ENCODE measurements at regions of chr11 and their contacts with region 1.

Region 1: GRCh38 chr11:65251476-65251875 is 10.3 kb upstream of the POLA2 start:
- DNase-seq: no peak
- H3K4me3 ChIP-seq: no peak overlapping the region
- H3K27ac ChIP-seq: no peak overlapping the region
- H3K4me1 ChIP-seq: no peaks in the 10 kb centered on the region
- H3K27me3 ChIP-seq: no peaks in the 10 kb centered on the region
- CTCF ChIP-seq: no peak
- EP300 ChIP-seq: no peak
- POLR2A ChIP-seq: no peak

Region 2: DNA sequence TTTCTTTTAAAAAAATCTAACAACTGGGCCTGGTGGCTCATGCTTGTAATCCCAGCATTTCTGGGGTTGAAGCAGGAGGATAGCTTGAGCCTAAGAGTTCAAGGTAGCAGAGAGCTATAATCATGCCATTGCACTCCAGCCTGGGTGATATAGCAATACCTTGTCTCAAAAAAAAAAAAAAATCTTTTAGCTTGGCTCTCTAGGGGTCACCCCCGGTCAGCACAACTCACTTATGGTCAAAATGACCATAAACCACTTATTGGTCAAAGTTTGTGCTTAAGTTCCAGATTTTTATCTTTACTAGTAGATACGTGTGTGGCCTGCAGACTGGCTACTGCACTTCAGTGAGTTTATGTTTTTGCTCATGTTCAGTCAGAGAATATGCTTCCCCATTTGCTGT is 87.8 kb before region 1 on chr11:
- in situ Hi-C with region 1: loop called in 1 of 4 experiments (anchors 5 kb)
- intact Hi-C with region 1: no loop called
- DNase-seq: no peak
- H3K4me3 ChIP-seq: no peak overlapping the region
- H3K27ac ChIP-seq: no peak overlapping the region
- H3K4me1 ChIP-seq: peaks cover 0 to 9% (median 0%) of the 10 kb centered on the region in 4 donors
- H3K27me3 ChIP-seq: no peaks in the 10 kb centered on the region
- CTCF ChIP-seq: no peak
- EP300 ChIP-seq: no peak
- POLR2A ChIP-seq: no peak

Measured in transverse colon (tissue), 4 donors.